CD14-positive monocyte (primary cell): ENCODE measurements at regions of chr7 and their contacts with region 1.

Region 1: GRCh38 chr7:31122649-31123058 is 70.5 kb downstream of the ADCYAP1R1 start:
- DNase-seq: peak; percentile 37 to 65 (median 51)
- H3K4me3 ChIP-seq: no peak overlapping the region
- H3K4me3 Mint-ChIP-seq: no peak overlapping the region
- H3K27ac ChIP-seq: no peak overlapping the region
- H3K27ac Mint-ChIP-seq: no peak overlapping the region
- H3K4me1 ChIP-seq: no peaks in the 10 kb centered on the region
- H3K4me1 Mint-ChIP-seq: no peaks in the 10 kb centered on the region
- H3K27me3 ChIP-seq: no peaks in the 10 kb centered on the region
- H3K27me3 Mint-ChIP-seq: peaks cover 7 to 11% (median 10%) of the 10 kb centered on the region in 3 donors
- CTCF ChIP-seq: peak; percentile 75

Region 2: DNA sequence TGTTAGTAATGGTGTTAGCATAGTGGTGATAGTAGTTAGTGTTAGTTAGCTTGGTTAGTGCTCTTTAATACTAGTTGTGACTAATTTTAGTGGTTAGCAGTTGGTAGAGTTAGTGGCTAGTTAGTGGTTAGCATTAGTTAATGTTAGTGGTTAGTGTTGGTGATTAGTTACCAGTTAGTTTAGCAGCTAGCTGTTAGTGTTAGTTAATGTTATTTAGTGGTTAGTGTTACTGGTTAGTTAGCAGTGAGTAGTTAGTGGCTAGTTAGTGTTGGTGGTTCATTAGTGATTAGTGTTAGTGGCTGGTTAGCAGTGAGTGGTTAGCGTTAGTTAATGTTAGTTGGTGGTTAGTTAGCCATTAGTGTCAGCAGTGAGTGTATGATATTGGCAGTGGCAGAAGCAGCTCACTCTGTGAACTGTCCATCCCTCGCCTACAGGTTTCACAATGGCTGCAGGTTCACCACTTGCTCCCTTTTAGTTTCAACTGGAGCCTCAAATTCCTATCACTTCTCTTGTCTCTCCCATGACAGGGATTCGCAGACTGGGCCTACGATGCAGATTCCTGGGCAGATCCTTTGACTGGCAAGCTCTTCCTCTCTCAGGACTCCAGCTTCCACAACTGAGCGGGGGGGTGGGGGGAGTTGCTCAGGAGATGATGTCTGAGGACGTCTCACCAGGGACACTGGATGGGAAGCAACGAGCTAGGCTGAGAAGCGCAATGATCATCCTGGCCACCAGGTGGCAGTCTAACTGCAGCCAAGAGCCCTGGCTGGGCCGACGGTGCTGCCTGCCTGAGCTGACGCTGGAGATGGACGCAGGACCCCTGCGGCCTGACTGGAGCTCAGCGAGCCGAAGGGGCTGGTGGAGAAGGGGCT is 139.4 kb before region 1 on chr7:
- intact Hi-C with region 1: loop called (anchors 2 kb)
- DNase-seq: peak; percentile 46 to 66 (median 60)
- H3K4me3 ChIP-seq: no peak overlapping the region
- H3K4me3 Mint-ChIP-seq: no peak overlapping the region
- H3K27ac ChIP-seq: no peak overlapping the region
- H3K27ac Mint-ChIP-seq: no peak overlapping the region
- H3K4me1 ChIP-seq: peaks cover 0 to 2% of the 10 kb centered on the region in 2 donors
- H3K4me1 Mint-ChIP-seq: peaks cover 6% of the 10 kb centered on the region
- H3K27me3 ChIP-seq: peaks cover 0 to 24% of the 10 kb centered on the region in 2 donors
- H3K27me3 Mint-ChIP-seq: peaks cover 22 to 50% (median 29%) of the 10 kb centered on the region in 3 donors
- CTCF ChIP-seq: peak; percentile 91

Region 3: DNA sequence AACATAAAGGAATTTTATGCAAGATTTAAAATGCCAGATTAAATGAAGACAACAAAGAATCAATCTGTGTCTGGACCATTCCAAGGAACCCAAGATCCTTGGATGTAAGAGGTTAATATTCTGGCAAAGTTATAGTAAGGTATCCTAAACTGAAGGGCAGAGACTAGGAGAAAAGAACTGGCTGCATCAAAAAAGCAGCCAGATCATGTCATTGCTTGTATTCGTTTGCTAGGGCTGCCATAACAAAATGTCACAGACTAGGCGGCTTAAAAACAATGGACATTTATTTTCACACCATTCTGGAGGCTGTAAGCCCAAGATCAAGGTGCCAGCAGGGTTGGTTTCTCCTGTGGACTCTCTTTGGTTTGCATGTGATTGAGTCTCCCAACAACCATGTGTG is 29.2 kb after region 1 on chr7:
- intact Hi-C with region 1: no loop called
- DNase-seq: no peak
- H3K4me3 ChIP-seq: no peak overlapping the region
- H3K4me3 Mint-ChIP-seq: no peak overlapping the region
- H3K27ac ChIP-seq: no peak overlapping the region
- H3K27ac Mint-ChIP-seq: no peak overlapping the region
- H3K4me1 ChIP-seq: no peaks in the 10 kb centered on the region
- H3K4me1 Mint-ChIP-seq: no peaks in the 10 kb centered on the region
- H3K27me3 ChIP-seq: no peaks in the 10 kb centered on the region
- H3K27me3 Mint-ChIP-seq: peaks cover 1 to 6% (median 1%) of the 10 kb centered on the region in 3 donors
- CTCF ChIP-seq: no peak